ENCODE measurements at regions of chr5 and their contacts with region 1.

Region 1: GRCh38 chr5:133111299-133111698 is 59.5 kb downstream of the HSPA4 start:
- DNase-seq: peak; percentile 72 to 76 (median 74)
- H3K4me3 ChIP-seq: no peak overlapping the region
- H3K4me3 Mint-ChIP-seq: peak overlapping the region in 4 of 8 donors; percentile 2 to 77 (median 4)
- H3K27ac ChIP-seq: no peak overlapping the region
- H3K27ac Mint-ChIP-seq: peak overlapping the region in 2 of 7 donors; percentile 80 to 84
- H3K4me1 ChIP-seq: peaks cover 17% of the 10 kb centered on the region
- H3K4me1 Mint-ChIP-seq: peaks cover 21 to 27% (median 22%) of the 10 kb centered on the region in 4 donors
- H3K27me3 ChIP-seq: no peaks in the 10 kb centered on the region
- H3K27me3 Mint-ChIP-seq: no peaks in the 10 kb centered on the region

Region 2: GRCh38 chr5:133130387-133131118 is 19.3 kb after region 1 on chr5:
- CTCF ChIA-PET with region 1: interaction called, 10 read pairs
- POLR2A ChIA-PET with region 1: no interaction called
- intact Hi-C with region 1: no loop called
- DNase-seq: no peak
- H3K4me3 ChIP-seq: no peak overlapping the region
- H3K4me3 Mint-ChIP-seq: no peak overlapping the region
- H3K27ac ChIP-seq: no peak overlapping the region
- H3K27ac Mint-ChIP-seq: no peak overlapping the region
- H3K4me1 ChIP-seq: no peaks in the 10 kb centered on the region
- H3K4me1 Mint-ChIP-seq: no peaks in the 10 kb centered on the region
- H3K27me3 ChIP-seq: no peaks in the 10 kb centered on the region
- H3K27me3 Mint-ChIP-seq: peaks cover 0 to 3% of the 10 kb centered on the region in 2 donors

Region 3: GRCh38 chr5:133225671-133226152 is 114.4 kb after region 1 on chr5:
- CTCF ChIA-PET with region 1: interaction called, 20 read pairs
- POLR2A ChIA-PET with region 1: no interaction called
- intact Hi-C with region 1: no loop called
- DNase-seq: no peak
- H3K4me3 ChIP-seq: no peak overlapping the region
- H3K4me3 Mint-ChIP-seq: no peak overlapping the region
- H3K27ac ChIP-seq: no peak overlapping the region
- H3K27ac Mint-ChIP-seq: no peak overlapping the region
- H3K4me1 ChIP-seq: no peaks in the 10 kb centered on the region
- H3K4me1 Mint-ChIP-seq: peaks cover 0 to 1% (median 0%) of the 10 kb centered on the region in 4 donors
- H3K27me3 ChIP-seq: no peaks in the 10 kb centered on the region
- H3K27me3 Mint-ChIP-seq: peaks cover 0 to 2% of the 10 kb centered on the region in 2 donors

Region 4: DNA sequence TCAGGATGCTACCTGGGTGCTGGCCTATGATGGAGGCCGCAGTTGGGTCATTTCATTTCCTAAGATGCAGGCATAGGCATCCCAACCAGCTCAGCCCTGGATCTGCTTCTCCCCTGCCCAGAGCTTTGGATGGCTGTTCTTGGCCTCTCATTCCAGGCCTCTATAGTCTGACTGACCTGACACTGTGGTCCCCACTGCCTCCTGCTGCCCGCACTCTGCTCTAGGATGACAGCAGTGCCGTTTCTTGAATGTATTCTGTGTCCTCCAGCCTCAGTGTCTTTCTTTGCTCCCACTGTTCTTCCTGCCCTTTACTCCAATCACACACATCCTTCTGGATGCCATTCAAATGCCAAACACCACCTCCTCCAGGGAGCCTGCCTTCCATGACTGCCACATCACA is 176.2 kb after region 1 on chr5:
- CTCF ChIA-PET with region 1: interaction called, 46 read pairs
- POLR2A ChIA-PET with region 1: interaction called, 5 read pairs
- intact Hi-C with region 1: no loop called
- DNase-seq: peak in 3 of 5 donors; percentile 12 to 26 (median 17)
- H3K4me3 ChIP-seq: no peak overlapping the region
- H3K4me3 Mint-ChIP-seq: no peak overlapping the region
- H3K27ac ChIP-seq: no peak overlapping the region
- H3K27ac Mint-ChIP-seq: peak overlapping the region in 1 of 7 donors; percentile 1
- H3K4me1 ChIP-seq: no peaks in the 10 kb centered on the region
- H3K4me1 Mint-ChIP-seq: no peaks in the 10 kb centered on the region
- H3K27me3 ChIP-seq: no peaks in the 10 kb centered on the region
- H3K27me3 Mint-ChIP-seq: no peaks in the 10 kb centered on the region

Region 5: DNA sequence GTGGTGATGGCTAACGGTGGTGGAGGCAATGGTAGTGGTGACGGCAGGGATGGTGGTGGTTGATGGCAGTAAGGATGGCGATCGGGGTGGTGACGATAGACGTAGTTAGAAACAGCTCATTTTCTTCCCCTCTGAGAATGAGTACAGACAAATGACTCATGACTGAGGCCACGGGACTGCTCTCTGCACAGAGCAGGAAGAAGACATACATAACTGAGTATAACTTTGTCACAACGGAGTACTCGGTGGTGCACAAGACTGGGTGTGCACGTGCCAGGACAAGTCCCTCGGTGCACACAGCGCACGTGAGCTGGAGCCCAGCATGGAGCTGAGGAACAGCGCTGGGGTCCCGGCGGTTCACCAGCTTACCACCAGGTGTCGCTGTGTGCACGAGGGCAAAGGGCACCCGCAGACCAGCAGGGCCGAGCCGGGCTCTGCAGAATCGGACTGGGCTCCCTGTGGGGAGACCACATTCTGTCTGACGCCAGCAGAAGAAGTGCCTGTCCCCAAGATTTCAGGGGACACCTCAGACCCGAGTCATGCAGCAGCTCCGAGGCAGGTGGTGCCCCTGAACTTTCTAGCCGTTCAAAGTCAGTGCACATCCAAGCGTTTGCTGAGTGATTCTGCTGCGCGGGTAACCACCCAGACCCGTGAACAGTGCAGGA is 312.5 kb after region 1 on chr5:
- CTCF ChIA-PET with region 1: interaction called, 3 read pairs
- POLR2A ChIA-PET with region 1: no interaction called
- intact Hi-C with region 1: loop called (anchors 1 kb)
- DNase-seq: peak; percentile 47 to 57 (median 53)
- H3K4me3 ChIP-seq: no peak overlapping the region
- H3K4me3 Mint-ChIP-seq: peak overlapping the region in 1 of 8 donors; percentile 29
- H3K27ac ChIP-seq: no peak overlapping the region
- H3K27ac Mint-ChIP-seq: no peak overlapping the region
- H3K4me1 ChIP-seq: peaks cover 8% of the 10 kb centered on the region
- H3K4me1 Mint-ChIP-seq: peaks cover 6 to 9% (median 7%) of the 10 kb centered on the region in 4 donors
- H3K27me3 ChIP-seq: no peaks in the 10 kb centered on the region
- H3K27me3 Mint-ChIP-seq: peaks cover 7 to 10% of the 10 kb centered on the region in 2 donors

Region 6: GRCh38 chr5:133977161-133977787 is 866.0 kb after region 1 on chr5:
- CTCF ChIA-PET with region 1: no interaction called
- POLR2A ChIA-PET with region 1: no interaction called
- intact Hi-C with region 1: loop called (anchors 10 kb)
- DNase-seq: no peak
- H3K4me3 ChIP-seq: no peak overlapping the region
- H3K4me3 Mint-ChIP-seq: no peak overlapping the region
- H3K27ac ChIP-seq: no peak overlapping the region
- H3K27ac Mint-ChIP-seq: peak overlapping the region in 5 of 7 donors; percentile 27 to 81 (median 59)
- H3K4me1 ChIP-seq: no peaks in the 10 kb centered on the region
- H3K4me1 Mint-ChIP-seq: peaks cover 0 to 6% (median 4%) of the 10 kb centered on the region in 4 donors
- H3K27me3 ChIP-seq: no peaks in the 10 kb centered on the region
- H3K27me3 Mint-ChIP-seq: no peaks in the 10 kb centered on the region

Region 7: GRCh38 chr5:134113902-134114875 is 1002.9 kb after region 1 on chr5 and contains the start of gene TCF7:
- CTCF ChIA-PET with region 1: no interaction called
- POLR2A ChIA-PET with region 1: no interaction called
- intact Hi-C with region 1: no loop called
- DNase-seq: peak; percentile 78 to 83 (median 81)
- H3K4me3 ChIP-seq: peak within 1 kb of the TSS; percentile 92 to 97
- H3K4me3 Mint-ChIP-seq: peak within 1 kb of the TSS; percentile 96 to 99 (median 97)
- H3K27ac ChIP-seq: peak within 1 kb of the TSS; percentile 97
- H3K27ac Mint-ChIP-seq: peak within 1 kb of the TSS; percentile 94 to 98 (median 97)
- H3K4me1 ChIP-seq: peaks cover 68% of the 10 kb centered on the region
- H3K4me1 Mint-ChIP-seq: peaks cover 38 to 80% (median 53%) of the 10 kb centered on the region in 4 donors
- H3K27me3 ChIP-seq: no peaks in the 10 kb centered on the region
- H3K27me3 Mint-ChIP-seq: no peaks in the 10 kb centered on the region
- total RNA-seq, gene TCF7: 770 to 841 TPM